ENCODE measurements at regions of chr2 and their contacts with region 1.

Region 1: DNA sequence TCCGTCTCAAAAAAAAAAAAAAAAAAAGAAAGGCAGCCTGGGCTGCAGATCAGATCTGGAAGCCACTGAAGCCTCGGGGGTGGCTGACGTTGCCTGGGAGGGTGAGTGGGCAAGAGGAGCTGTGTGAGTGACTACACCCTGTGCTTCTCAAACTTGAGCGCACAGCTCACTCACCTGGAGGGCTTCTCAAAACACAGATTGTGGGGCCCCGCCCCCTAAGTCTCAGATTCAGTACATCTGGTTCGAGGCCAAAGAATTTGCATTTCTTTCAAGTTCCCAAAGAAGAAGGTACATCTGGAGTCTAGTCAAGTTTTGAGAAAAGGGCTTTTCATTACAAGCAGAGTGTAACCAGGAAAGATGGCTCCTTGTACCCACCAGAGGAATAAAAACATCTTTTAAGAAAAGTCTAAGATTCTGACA is 97.7 kb upstream of the CAB39 start:
- DNase-seq: peak; percentile 82
- ATAC-seq: peak; percentile 89
- H3K4me3 Mint-ChIP-seq: no peak overlapping the region
- H3K27ac Mint-ChIP-seq: peak overlapping the region; percentile 69
- H3K4me1 Mint-ChIP-seq: peaks cover 35% of the 10 kb centered on the region
- H3K27me3 Mint-ChIP-seq: no peaks in the 10 kb centered on the region

Region 2: DNA sequence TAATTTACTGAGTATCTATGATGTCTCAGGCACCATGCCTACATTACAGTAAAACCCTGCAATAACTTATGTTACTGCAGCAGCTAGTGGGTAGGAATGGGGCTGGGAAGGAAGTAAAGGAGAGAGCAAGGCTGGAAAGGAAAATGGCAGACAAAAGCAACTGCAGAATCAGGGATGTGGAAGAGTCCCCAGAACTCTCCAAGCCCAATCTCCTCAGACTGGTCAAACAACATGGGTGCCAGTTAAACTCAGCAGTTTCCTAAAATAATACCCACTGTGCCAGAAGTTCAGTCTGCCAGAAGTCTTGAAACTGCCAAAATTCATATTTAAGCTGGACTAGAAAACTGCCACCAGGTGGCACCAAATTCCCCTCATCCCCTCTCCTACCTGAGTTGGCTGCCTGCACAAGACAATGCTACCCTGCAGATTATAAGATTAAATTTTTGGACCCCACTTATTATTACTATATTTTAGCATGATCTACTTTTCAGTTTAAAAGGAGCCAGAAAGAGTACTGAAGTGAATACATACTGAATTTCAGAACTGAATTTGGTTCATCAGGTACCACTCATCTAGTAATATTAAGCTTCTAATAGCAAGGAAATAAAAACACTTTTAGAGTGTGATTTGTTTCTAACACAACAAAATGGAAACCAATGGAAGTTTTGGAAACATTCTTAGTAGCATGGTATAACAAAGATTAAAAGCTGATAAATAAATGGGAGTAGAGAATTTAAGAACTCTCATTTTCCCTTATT is 813.7 kb before region 1 on chr2:
- CTCF ChIA-PET with region 1: no interaction called
- POLR2A ChIA-PET with region 1: no interaction called
- intact Hi-C with region 1: loop called in 1 of 2 experiments (anchors 5 kb)
- DNase-seq: peak; percentile 86
- ATAC-seq: peak; percentile 78
- H3K4me3 Mint-ChIP-seq: no peak overlapping the region
- H3K27ac Mint-ChIP-seq: no peak overlapping the region
- H3K4me1 Mint-ChIP-seq: no peaks in the 10 kb centered on the region
- H3K27me3 Mint-ChIP-seq: no peaks in the 10 kb centered on the region

Region 3: GRCh38 chr2:230068016-230068650 is 546.8 kb before region 1 on chr2:
- CTCF ChIA-PET with region 1: interaction called, 4 read pairs
- POLR2A ChIA-PET with region 1: no interaction called
- intact Hi-C with region 1: loop called (anchors 1 to 5 kb)
- DNase-seq: peak; percentile 77
- ATAC-seq: peak; percentile 57
- H3K4me3 Mint-ChIP-seq: peak overlapping the region; percentile 72
- H3K27ac Mint-ChIP-seq: peak overlapping the region; percentile 79
- H3K4me1 Mint-ChIP-seq: peaks cover 17% of the 10 kb centered on the region
- H3K27me3 Mint-ChIP-seq: peaks cover 12% of the 10 kb centered on the region

Region 4: DNA sequence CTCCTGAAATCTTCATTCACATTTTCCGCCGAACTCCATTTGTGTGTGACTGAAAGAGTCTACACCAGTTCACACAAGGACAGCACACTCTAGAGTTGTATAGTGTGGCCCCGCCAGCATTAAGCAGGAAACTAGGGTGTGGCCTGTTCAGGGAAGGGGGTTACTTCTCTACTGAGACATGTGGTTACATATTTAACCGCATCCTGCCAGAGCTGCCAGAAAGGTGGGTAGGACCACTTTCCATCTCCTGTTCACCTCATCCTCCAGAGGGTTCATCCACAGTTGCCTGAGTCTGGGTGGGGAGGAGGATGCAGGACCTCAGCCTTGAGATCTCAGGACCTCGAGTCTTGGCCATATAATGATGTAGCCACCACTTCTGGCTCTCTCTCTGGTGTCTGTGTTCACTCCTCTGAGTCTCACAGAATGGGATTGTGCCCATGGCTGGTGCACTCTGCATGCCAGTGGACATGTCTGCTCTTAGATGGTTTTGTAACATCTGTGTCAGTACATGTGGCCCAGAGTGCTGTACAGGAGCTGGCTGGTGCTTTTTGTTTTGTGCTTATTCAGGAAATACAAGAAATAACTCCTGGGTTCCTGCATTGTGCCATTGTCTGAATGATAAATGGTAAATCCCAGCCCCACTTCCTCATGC is 295.6 kb before region 1 on chr2:
- CTCF ChIA-PET with region 1: no interaction called
- POLR2A ChIA-PET with region 1: no interaction called
- intact Hi-C with region 1: loop called (anchors 5 kb)
- DNase-seq: peak; percentile 80
- ATAC-seq: peak; percentile 96
- H3K4me3 Mint-ChIP-seq: peak overlapping the region; percentile 23
- H3K27ac Mint-ChIP-seq: peak overlapping the region; percentile 99
- H3K4me1 Mint-ChIP-seq: peaks cover 58% of the 10 kb centered on the region
- H3K27me3 Mint-ChIP-seq: no peaks in the 10 kb centered on the region

Region 5: GRCh38 chr2:230537531-230537976 is 77.4 kb before region 1 on chr2:
- CTCF ChIA-PET with region 1: interaction called, 3 read pairs
- POLR2A ChIA-PET with region 1: no interaction called
- intact Hi-C with region 1: loop called in 1 of 2 experiments (anchors 10 kb)
- DNase-seq: peak; percentile 69
- ATAC-seq: peak; percentile 72
- H3K4me3 Mint-ChIP-seq: no peak overlapping the region
- H3K27ac Mint-ChIP-seq: peak overlapping the region; percentile 66
- H3K4me1 Mint-ChIP-seq: peaks cover 18% of the 10 kb centered on the region
- H3K27me3 Mint-ChIP-seq: no peaks in the 10 kb centered on the region

Region 6: DNA sequence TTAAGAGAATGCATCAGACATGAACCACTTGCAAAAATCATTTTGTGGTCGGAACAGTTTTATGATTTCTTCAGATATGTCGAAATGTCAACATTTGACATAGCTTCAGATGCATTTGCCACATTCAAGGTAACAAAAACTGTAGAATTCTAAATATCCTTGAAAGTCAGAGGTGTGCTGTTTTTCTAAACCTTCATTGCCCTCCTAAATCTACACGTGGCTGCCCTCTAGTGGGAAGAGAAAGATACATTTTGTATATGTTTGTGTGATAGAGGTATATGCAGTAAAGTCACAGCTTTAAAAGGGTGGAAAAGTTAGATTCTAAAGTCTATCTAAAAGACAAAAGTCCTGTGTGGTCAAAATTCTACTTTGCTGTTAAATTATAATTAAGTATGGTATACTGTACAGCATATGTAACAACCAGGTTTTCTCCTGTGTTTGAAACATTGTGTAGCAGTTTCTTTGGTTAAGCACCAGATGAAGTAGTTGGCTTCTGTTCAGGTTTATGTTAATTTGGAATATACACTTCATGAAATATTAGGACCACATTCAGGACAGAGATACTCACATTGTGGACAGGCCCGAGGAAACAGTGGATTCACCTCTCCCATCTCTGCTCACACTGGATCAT is 184.0 kb after region 1 on chr2:
- CTCF ChIA-PET with region 1: interaction called, 14 read pairs
- POLR2A ChIA-PET with region 1: no interaction called
- intact Hi-C with region 1: loop called (anchors 1 to 5 kb)
- DNase-seq: peak; percentile 63
- ATAC-seq: no peak
- H3K4me3 Mint-ChIP-seq: no peak overlapping the region
- H3K27ac Mint-ChIP-seq: peak overlapping the region; percentile 82
- H3K4me1 Mint-ChIP-seq: peaks cover 18% of the 10 kb centered on the region
- H3K27me3 Mint-ChIP-seq: no peaks in the 10 kb centered on the region

Region 7: GRCh38 chr2:231212329-231212845 is 597.5 kb after region 1 on chr2:
- CTCF ChIA-PET with region 1: no interaction called
- POLR2A ChIA-PET with region 1: no interaction called
- intact Hi-C with region 1: no loop called
- DNase-seq: no peak
- ATAC-seq: no peak
- H3K4me3 Mint-ChIP-seq: no peak overlapping the region
- H3K27ac Mint-ChIP-seq: no peak overlapping the region
- H3K4me1 Mint-ChIP-seq: no peaks in the 10 kb centered on the region
- H3K27me3 Mint-ChIP-seq: no peaks in the 10 kb centered on the region